ENCODE measurements at regions of chr16 and their contacts with region 1.

Region 1: GRCh38 chr16:84228321-84228838 is 11.4 kb downstream of the KCNG4 start:
- DNase-seq: peak; percentile 49
- H3K4me3 ChIP-seq: no peak overlapping the region
- H3K27ac ChIP-seq: no peak overlapping the region
- H3K4me1 ChIP-seq: peaks cover 5% of the 10 kb centered on the region
- H3K27me3 ChIP-seq: peaks cover 0 to 2% of the 10 kb centered on the region in 2 experiments
- CTCF ChIP-seq: no peak
- POLR2A ChIP-seq: no peak

Region 2: GRCh38 chr16:83769397-83770008 is 458.9 kb before region 1 on chr16:
- CTCF ChIA-PET with region 1: no interaction called
- POLR2A ChIA-PET with region 1: no interaction called
- dilution Hi-C with region 1: no loop called
- intact Hi-C with region 1: no loop called
- DNase-seq: no peak
- H3K4me3 ChIP-seq: no peak overlapping the region
- H3K27ac ChIP-seq: peak overlapping the region; percentile 10
- H3K4me1 ChIP-seq: peaks cover 12% of the 10 kb centered on the region
- H3K27me3 ChIP-seq: no peaks in the 10 kb centered on the region
- CTCF ChIP-seq: no peak
- POLR2A ChIP-seq: no peak

Region 3: DNA sequence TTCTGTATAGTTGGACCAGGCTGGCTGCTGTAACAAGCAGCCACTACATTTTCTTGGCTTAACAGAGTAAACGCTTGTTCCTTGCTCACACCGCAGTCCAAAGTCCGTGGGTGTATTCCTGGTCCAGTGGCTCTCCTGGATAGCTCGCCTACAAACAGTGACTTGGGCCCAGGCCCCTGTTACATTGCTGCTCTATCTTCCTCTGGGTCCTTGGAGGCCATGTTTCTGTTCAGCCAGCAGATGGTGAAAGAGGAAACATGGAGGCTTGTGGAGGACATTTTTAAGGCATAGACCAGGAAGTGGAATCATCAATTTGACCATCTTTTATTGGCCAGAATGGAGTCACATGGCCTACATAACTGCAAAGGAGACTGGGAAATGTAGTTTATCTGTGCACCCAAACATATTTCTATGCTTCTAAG is 195.0 kb after region 1 on chr16:
- CTCF ChIA-PET with region 1: no interaction called
- POLR2A ChIA-PET with region 1: no interaction called
- dilution Hi-C with region 1: loop called (anchors 25 kb)
- intact Hi-C with region 1: no loop called
- DNase-seq: peak; percentile 14
- H3K4me3 ChIP-seq: no peak overlapping the region
- H3K27ac ChIP-seq: no peak overlapping the region
- H3K4me1 ChIP-seq: no peaks in the 10 kb centered on the region
- H3K27me3 ChIP-seq: no peaks in the 10 kb centered on the region
- CTCF ChIP-seq: no peak
- POLR2A ChIP-seq: no peak

Measured in endothelial cell of umbilical vein (primary cell).